WTC11 (cell line): ENCODE measurements at regions of chr22 and their contacts with region 1.

Region 1: GRCh38 chr22:30396871-30397655 is at the start of gene SEC14L2:
- DNase-seq: peak; percentile 76
- ATAC-seq: peak; percentile 84
- H3K4me3 Mint-ChIP-seq: peak within 1 kb of the TSS; percentile 85
- H3K27ac Mint-ChIP-seq: no peak within 1 kb of the TSS
- H3K4me1 Mint-ChIP-seq: peaks cover 37% of the 10 kb centered on the region
- H3K27me3 Mint-ChIP-seq: peaks cover 64% of the 10 kb centered on the region
- CTCF ChIP-seq: no peak
- total RNA-seq, gene SEC14L2: 2.4 to 3.9 TPM (median 3.9 TPM) in 3 replicates

Region 2: DNA sequence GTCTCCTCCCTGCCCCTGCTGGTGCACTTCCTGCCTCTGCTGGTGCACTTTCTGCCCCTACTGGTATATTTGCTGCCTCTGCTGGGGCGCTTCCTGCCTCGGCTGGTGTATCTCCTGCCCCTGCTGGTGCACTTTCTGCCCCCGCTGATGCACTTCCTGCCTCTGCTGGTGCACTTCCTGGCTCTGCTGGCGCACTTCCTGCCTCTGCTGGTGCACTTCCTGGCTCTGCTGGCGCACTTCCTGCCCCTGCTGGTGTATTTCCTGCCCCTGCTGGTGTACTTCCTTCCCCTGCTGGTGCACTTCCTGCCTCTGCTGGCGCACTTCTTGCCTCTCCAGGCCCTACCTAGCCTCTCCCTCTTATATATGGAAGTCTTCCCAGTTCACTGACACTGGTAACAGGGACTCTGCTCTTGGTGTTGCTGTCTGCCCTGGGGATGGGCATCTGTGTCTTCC is 38.6 kb after region 1 on chr22:
- CTCF ChIA-PET with region 1: interaction called, 10 read pairs
- POLR2A ChIA-PET with region 1: interaction called, 7 read pairs
- DNase-seq: no peak
- ATAC-seq: no peak; the same call in 1 of the 2 replicates
- H3K4me3 Mint-ChIP-seq: no peak overlapping the region
- H3K27ac Mint-ChIP-seq: no peak overlapping the region
- H3K4me1 Mint-ChIP-seq: peaks cover 9% of the 10 kb centered on the region
- H3K27me3 Mint-ChIP-seq: peaks cover 21% of the 10 kb centered on the region
- CTCF ChIP-seq: no peak

Region 3: GRCh38 chr22:30444632-30445437 is 47.8 kb after region 1 on chr22:
- CTCF ChIA-PET with region 1: interaction called, 16 read pairs
- POLR2A ChIA-PET with region 1: interaction called, 4 read pairs
- DNase-seq: peak; percentile 85
- ATAC-seq: peak; percentile 90
- H3K4me3 Mint-ChIP-seq: peak overlapping the region; percentile 56
- H3K27ac Mint-ChIP-seq: no peak overlapping the region
- H3K4me1 Mint-ChIP-seq: peaks cover 7% of the 10 kb centered on the region
- H3K27me3 Mint-ChIP-seq: no peaks in the 10 kb centered on the region; the same call in 1 of the 2 replicates
- CTCF ChIP-seq: peak; percentile 91

Region 4: GRCh38 chr22:30556388-30556787 is 159.3 kb after region 1 on chr22:
- CTCF ChIA-PET with region 1: no interaction called
- POLR2A ChIA-PET with region 1: no interaction called
- DNase-seq: no peak
- ATAC-seq: peak; percentile 23; the same call in 1 of the 2 replicates
- H3K4me3 Mint-ChIP-seq: no peak overlapping the region
- H3K27ac Mint-ChIP-seq: no peak overlapping the region
- H3K4me1 Mint-ChIP-seq: peaks cover 30% of the 10 kb centered on the region
- H3K27me3 Mint-ChIP-seq: no peaks in the 10 kb centered on the region
- CTCF ChIP-seq: no peak